Mammary epithelial cell (primary cell): ENCODE measurements at regions of chr4 and their contacts with region 1.

Region 1: DNA sequence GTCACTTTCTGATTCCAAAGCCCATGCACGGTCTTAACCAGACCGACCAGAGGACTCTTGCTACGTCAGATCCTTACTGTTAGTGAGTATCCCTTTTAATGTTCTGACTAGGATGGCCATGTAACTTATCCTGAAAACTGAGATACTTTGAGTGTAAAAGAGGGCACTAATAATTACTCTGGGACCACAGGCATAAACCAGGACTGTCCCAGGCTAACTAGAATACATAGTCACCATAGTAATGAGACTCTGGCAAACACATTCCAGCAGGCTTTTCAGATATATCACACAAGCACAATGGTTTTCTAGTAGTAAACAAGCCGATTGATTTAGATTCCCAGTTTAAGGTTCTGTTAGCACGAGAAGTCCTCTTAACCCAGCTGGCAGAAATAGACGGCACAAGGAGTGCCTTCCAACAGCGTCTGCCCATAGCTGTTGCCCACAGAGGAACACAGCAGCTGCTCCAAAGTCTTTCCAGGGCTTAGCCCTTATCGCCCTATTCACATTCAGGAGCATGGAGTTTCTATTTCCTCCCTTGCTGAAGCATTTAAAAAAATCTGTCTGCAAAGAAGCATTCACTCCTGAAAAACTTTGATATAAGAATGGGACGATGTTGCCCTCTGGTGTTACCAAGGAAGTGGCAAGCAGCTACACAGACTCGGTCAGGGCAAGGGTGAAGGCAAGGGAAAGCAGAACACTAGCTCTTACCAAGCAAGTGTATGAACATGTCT is 92.4 kb downstream of the CXCL13 start:
- DNase-seq: peak; percentile 64
- H3K4me3 ChIP-seq: no peak overlapping the region
- H3K27ac ChIP-seq: no peak overlapping the region
- H3K4me1 ChIP-seq: peaks cover 30% of the 10 kb centered on the region
- H3K27me3 ChIP-seq: no peaks in the 10 kb centered on the region
- CTCF ChIP-seq: peak; percentile 63 to 77

Region 2: DNA sequence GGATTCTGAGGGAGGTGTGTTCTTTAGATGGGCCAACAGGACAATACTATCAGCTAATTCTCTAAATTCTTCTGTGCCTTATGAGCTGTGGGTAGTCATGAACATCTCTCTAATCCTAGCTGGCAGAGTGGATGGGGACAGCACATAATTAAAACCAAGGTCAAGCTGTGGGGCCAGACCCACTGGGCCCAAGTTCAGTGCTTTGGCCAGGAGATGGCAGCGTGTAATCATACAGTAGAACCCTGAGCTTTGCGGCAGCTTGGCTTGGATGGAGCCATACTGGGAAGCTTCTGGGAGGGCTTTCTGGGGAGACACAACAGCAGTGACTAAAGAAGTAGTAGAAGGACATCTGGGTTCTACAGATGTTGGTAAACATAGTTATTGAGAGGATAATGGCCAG is 232.8 kb before region 1 on chr4:
- CTCF ChIA-PET with region 1: interaction called, 5 read pairs
- dilution Hi-C with region 1: no loop called
- in situ Hi-C with region 1: no loop called
- intact Hi-C with region 1: loop called (anchors 1 kb)
- DNase-seq: peak; percentile 28
- H3K4me3 ChIP-seq: no peak overlapping the region
- H3K27ac ChIP-seq: no peak overlapping the region
- H3K4me1 ChIP-seq: no peaks in the 10 kb centered on the region
- H3K27me3 ChIP-seq: no peaks in the 10 kb centered on the region
- CTCF ChIP-seq: peak; percentile 54 to 74

Region 3: DNA sequence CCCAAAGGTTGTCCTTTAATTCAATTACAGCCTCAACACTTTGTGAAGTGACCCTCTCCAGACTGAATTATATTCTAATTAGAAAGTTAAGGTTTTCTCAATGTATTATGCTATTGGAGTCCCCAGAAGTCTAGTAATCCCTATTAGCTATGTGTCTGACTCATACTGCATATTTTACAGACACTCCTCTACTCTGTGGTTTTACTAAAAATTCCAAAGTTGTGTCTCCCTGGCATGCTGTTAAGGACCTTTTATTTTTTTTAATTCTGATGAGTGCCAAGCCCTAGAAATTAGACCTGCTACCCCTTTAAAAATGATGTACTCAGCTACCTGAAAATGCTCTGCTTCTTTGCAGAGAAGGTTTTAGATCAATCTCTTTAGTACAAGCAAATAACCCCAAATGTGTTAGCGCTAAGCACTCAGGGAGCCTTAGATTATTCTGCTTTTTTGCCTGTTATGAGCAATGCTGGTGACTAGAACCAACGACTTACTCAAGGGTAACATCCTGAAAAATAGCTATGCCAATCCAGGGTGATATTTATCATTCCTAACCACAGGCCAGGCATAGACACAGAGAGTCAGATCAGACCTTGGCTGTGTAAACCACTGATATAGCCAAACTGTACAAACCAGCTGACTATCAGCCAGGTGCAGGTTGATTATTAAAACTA is 118.5 kb before region 1 on chr4:
- CTCF ChIA-PET with region 1: no interaction called
- dilution Hi-C with region 1: no loop called
- in situ Hi-C with region 1: no loop called
- intact Hi-C with region 1: no loop called
- DNase-seq: peak; percentile 87
- H3K4me3 ChIP-seq: no peak overlapping the region
- H3K27ac ChIP-seq: peak overlapping the region; percentile 70
- H3K4me1 ChIP-seq: peaks cover 27% of the 10 kb centered on the region
- H3K27me3 ChIP-seq: no peaks in the 10 kb centered on the region
- CTCF ChIP-seq: no peak

Region 4: DNA sequence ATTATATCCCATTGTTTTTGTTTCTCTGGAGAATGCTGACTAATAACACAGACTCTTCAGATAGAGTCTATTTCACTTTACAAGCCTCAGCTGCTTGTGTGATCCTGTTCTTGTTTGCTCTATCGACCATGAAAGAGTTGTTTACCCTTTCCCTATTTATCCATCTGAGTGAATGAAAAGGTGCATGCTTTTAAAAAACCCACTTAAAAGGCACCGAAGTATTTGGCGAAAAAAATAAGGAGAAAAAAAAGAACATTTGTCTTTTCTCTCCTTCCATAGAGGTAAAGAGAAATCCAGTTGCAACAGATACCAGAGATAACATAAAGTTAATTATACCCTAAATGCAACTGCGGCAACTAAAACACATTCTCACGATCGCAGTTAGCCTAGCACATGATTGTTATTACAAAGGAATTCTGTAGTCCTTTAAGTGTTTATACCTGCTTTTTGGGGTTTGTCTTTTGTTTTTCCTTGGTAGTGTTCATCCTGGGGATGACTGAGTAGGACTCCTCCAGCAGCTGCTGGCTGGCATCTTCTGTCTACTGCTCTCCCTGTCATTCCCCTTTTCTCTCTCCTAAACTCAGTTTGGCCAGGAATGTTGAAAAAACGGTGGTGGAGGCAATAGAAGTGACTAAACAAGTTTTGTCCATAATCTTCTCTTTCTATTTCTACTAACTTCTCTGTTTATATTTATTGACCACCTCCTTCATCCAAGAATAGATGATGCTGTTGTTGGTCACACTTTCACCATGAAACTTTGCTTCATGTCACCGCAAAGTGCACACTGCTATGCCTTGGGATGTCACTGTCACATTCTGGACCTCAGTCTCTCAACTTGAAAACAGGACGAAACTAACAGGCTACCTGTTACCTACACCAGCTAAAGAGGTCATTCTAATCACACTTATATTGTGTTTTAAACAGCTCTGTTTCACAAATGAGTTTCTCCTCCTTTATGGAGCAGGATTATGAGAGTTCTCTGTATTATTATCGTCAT is 317.2 kb after region 1 on chr4:
- CTCF ChIA-PET with region 1: no interaction called
- dilution Hi-C with region 1: no loop called
- in situ Hi-C with region 1: no loop called
- intact Hi-C with region 1: no loop called
- DNase-seq: no peak
- H3K4me3 ChIP-seq: no peak overlapping the region
- H3K27ac ChIP-seq: no peak overlapping the region
- H3K4me1 ChIP-seq: no peaks in the 10 kb centered on the region
- H3K27me3 ChIP-seq: no peaks in the 10 kb centered on the region
- CTCF ChIP-seq: no peak